MCF 10A (cell line): ENCODE measurements at regions of chr1 and their contacts with region 1.

Region 1: GRCh38 chr1:111507411-111508201 is 4.2 kb upstream of the ADORA3 start:
- DNase-seq: peak; percentile 55
- H3K4me3 Mint-ChIP-seq: peak overlapping the region; percentile 56
- H3K27ac Mint-ChIP-seq: no peak overlapping the region
- H3K4me1 Mint-ChIP-seq: peaks cover 10% of the 10 kb centered on the region
- H3K27me3 Mint-ChIP-seq: no peaks in the 10 kb centered on the region
- CTCF ChIP-seq: no peak

Region 2: GRCh38 chr1:111334169-111334568 is 173.4 kb before region 1 on chr1:
- CTCF ChIA-PET with region 1: no interaction called
- POLR2A ChIA-PET with region 1: no interaction called
- intact Hi-C with region 1: no loop called
- DNase-seq: peak; percentile 59
- H3K4me3 Mint-ChIP-seq: no peak overlapping the region
- H3K27ac Mint-ChIP-seq: no peak overlapping the region
- H3K4me1 Mint-ChIP-seq: no peaks in the 10 kb centered on the region
- H3K27me3 Mint-ChIP-seq: no peaks in the 10 kb centered on the region
- CTCF ChIP-seq: peak; percentile 68

Region 3: DNA sequence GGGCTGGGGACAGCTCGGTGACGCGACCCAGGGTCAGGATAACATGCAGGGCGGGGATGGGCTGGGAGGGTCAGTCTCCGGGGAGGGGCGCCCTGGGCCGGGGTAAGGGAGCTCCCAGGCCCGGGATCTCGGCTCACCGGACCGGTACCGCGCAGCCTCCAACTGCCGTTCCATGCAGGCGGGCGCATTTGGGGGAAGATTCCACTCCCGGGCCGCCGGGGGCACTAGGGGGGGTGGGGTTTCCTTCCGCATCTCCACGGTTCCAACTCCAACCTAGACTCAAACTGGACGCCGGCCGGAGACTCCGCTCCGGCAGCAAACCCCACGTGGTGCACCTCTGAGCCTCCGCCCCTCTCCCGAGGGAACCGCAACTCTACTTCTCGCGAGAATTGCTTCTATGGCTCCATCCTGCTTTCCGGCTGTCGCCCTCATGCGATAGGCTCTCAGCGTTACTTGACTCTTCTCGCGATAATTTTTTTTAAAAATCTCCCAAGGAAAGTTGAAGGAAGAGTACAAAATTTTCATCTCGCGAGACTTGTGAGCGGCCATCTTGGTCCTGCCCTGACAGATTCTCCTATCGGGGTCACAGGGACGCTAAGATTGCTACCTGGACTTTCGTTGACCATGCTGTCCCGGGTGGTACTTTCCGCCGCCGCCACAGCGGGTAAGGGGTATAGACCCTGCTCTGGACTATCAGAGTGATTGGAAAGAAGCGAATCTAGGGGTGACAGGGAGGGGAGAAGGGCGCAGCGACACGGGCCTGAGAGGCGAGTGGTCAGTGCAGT is 58.5 kb before region 1 on chr1 and contains the starts of genes ATP5PB and WDR77:
- CTCF ChIA-PET with region 1: interaction called, 4 read pairs
- POLR2A ChIA-PET with region 1: interaction called, 12 read pairs
- intact Hi-C with region 1: no loop called
- DNase-seq: peak; percentile 98
- H3K4me3 Mint-ChIP-seq: peak within 1 kb of the TSS; percentile 97
- H3K27ac Mint-ChIP-seq: peak within 1 kb of the TSS; percentile 99
- H3K4me1 Mint-ChIP-seq: peaks cover 36% of the 10 kb centered on the region
- H3K27me3 Mint-ChIP-seq: no peaks in the 10 kb centered on the region
- CTCF ChIP-seq: no peak
- total RNA-seq, gene ATP5PB: 317 and 348 TPM in 2 replicates
- total RNA-seq, gene WDR77: 35.7 and 54.2 TPM in 2 replicates

Region 4: DNA sequence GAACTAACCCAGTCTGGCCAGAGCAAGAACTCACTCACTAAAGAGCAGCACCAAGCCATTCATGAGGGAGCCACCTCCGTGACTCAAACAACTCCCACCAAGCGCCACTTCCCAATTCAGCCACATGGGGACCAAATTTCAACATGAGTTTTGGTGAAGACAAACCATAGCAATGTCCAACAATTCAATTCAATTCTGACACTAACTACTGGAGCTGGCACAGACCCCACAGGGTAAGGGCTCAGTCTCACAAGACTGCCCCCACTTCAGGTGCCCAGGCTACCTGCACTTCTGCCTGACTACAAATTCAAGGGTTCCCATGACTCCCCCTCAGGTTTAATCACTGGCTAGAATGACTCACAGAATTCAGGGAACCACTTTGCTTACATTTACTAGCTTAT is 63.2 kb after region 1 on chr1:
- CTCF ChIA-PET with region 1: interaction called, 14 read pairs
- POLR2A ChIA-PET with region 1: no interaction called
- intact Hi-C with region 1: no loop called
- DNase-seq: peak; percentile 36
- H3K4me3 Mint-ChIP-seq: no peak overlapping the region
- H3K27ac Mint-ChIP-seq: no peak overlapping the region
- H3K4me1 Mint-ChIP-seq: peaks cover 5% of the 10 kb centered on the region
- H3K27me3 Mint-ChIP-seq: no peaks in the 10 kb centered on the region
- CTCF ChIP-seq: no peak

Region 5: DNA sequence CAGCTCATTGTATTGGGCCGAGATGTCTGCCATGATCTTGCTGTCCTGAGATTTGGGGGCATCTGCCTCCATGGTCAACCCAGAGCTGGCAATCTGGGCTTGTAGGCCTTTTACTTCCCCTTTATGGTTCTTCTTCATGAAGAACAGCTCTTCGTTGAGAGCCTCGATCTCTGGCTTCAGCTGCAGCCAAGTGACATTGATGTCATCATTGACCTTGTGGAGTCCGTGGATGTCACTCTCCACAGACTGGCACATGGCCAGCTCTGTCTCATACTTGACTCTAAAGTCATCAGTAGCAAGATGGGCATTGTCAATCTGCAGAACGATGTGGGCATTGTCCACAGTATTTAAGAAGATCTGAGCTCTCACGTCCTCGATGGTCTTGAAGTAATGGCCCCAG is 141.2 kb after region 1 on chr1:
- CTCF ChIA-PET with region 1: interaction called, 33 read pairs
- POLR2A ChIA-PET with region 1: interaction called, 3 read pairs
- intact Hi-C with region 1: no loop called
- DNase-seq: no peak
- H3K4me3 Mint-ChIP-seq: no peak overlapping the region
- H3K27ac Mint-ChIP-seq: no peak overlapping the region
- H3K4me1 Mint-ChIP-seq: peaks cover 6% of the 10 kb centered on the region
- H3K27me3 Mint-ChIP-seq: no peaks in the 10 kb centered on the region
- CTCF ChIP-seq: no peak

Region 6: DNA sequence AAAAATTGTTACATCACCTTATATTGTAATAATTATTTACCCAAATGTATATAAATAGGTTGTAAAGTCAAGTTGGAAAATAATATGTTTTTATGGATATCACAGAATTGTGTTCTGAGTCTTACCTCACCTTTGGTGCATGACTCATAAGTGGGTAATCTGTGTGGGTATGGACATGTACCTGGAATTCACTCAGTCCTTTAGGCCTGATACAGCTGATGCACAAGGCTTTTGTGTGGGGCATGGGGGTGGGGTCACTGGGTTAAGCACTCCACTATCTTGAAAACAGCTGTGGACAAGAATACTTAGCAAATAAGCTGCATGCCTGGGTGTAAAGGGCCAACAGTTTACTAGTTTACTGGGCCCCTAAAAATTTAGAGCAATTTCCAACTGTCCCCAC is 197.2 kb after region 1 on chr1:
- CTCF ChIA-PET with region 1: interaction called, 13 read pairs
- POLR2A ChIA-PET with region 1: no interaction called
- intact Hi-C with region 1: no loop called
- DNase-seq: peak; percentile 71
- H3K4me3 Mint-ChIP-seq: no peak overlapping the region
- H3K27ac Mint-ChIP-seq: no peak overlapping the region
- H3K4me1 Mint-ChIP-seq: peaks cover 15% of the 10 kb centered on the region
- H3K27me3 Mint-ChIP-seq: no peaks in the 10 kb centered on the region
- CTCF ChIP-seq: no peak

Region 7: DNA sequence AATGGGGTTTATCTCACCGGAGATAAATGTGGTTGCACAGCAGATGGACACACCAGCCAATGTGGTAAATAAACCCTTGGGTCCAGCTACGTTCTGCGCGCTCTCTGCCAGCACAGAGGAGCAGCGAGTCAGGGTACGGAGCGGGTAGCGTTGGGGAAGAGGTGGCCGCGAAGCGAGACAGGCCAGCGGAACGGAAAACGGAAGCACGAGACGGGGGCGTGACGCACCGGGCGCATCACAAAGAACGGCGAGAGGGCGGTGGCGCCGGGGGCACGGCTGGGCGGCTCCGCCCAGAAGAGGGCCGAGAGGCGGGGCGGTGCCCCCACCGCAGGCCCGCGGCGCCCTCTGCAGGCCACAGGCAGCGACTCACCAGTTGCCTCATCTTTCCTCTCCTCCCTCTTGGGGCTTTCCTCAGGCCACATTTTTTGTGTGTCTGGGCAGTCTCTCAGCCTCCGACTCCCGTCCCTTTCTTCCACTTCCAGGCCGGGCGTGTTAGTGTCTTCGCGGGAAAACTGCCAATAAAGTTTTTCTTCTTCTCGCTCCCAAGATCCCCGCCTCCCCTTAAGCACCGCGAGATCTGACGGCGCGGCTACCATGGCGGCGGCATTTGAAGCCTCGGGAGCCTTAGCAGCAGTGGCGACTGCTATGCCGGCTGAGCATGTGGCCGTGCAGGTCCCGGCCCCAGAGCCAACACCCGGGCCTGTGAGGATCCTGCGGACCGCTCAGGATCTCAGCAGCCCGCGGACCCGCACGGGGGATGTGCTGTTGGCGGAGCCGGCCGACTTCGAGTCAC is 247.9 kb after region 1 on chr1 and contains the start of gene DDX20:
- CTCF ChIA-PET with region 1: interaction called, 21 read pairs
- POLR2A ChIA-PET with region 1: interaction called, 7 read pairs
- intact Hi-C with region 1: no loop called
- DNase-seq: peak; percentile 96
- H3K4me3 Mint-ChIP-seq: peak within 1 kb of the TSS; percentile 95
- H3K27ac Mint-ChIP-seq: peak within 1 kb of the TSS; percentile 95
- H3K4me1 Mint-ChIP-seq: peaks cover 6% of the 10 kb centered on the region
- H3K27me3 Mint-ChIP-seq: no peaks in the 10 kb centered on the region
- CTCF ChIP-seq: peak; percentile 88
- total RNA-seq, gene DDX20: 14.8 and 16.8 TPM in 2 replicates